ENCODE measurements at regions of chr22 and their contacts with region 1.

Region 1: GRCh38 chr22:19679522-19680101 is 34.7 kb upstream of the SEPTIN5 start:
- DNase-seq: peak in 1 of 2 donors; percentile 49
- ATAC-seq: peak; percentile 46

Region 2: GRCh38 chr22:19717691-19718455 is 38.3 kb after region 1 on chr22:
- intact Hi-C with region 1: loop called in 1 of 2 experiments (anchors 2 kb)
- DNase-seq: peak; percentile 40 to 74
- ATAC-seq: peak; percentile 86